Natural killer cell (primary cell): ENCODE measurements at regions of chr20 and their contacts with region 1.

Region 1: DNA sequence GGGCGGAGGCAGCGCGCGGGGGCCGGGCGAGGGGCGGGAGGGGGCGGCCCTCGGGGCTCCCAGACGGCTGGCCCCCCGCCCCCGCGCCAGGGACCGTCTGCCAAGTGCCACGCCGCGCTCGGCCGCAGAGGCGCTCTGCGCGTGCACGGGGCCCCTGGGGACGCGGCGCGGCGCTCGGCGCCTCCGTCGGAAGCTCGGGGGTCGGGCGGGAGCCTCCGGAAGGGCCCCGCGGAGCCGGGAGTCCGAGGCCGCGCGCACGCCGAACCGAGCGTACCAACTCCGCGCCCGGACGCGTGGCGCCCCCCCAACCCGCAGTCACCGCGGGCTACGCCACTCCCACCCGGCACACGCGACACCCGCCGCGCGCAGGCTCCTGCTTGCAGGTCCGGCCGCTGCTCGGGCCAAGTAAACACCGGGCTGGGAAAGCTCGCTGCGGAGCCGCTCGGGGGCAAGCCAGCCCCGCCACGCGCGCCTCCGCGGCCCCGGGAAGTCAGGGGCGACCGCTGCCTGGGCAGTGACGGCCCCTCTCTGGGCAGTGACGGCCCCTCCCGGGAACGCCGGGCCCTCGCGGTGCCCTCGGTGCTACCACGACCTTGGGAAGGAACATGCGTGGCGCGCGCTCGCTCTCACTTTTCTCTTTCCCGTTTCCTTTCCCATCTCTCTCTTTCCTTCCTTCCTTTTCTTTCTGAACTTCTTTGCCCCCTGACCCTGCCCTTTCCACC is 384 bp upstream of the PREX1 start:
- DNase-seq: peak; percentile 89 to 91
- ATAC-seq: peak; percentile 66 to 89 (median 77)
- H3K4me3 ChIP-seq: peak overlapping the region; percentile 23
- H3K4me3 Mint-ChIP-seq: peak overlapping the region; percentile 91
- H3K27ac ChIP-seq: peak overlapping the region; percentile 43
- H3K27ac Mint-ChIP-seq: peak overlapping the region; percentile 81 to 86
- H3K4me1 ChIP-seq: peaks cover 46% of the 10 kb centered on the region
- H3K4me1 Mint-ChIP-seq: peaks cover 32 to 47% of the 10 kb centered on the region in 2 donors
- H3K27me3 ChIP-seq: no peaks in the 10 kb centered on the region
- H3K27me3 Mint-ChIP-seq: no peaks in the 10 kb centered on the region
- CTCF ChIP-seq: no peak

Region 2: GRCh38 chr20:48657475-48658470 is 170.4 kb before region 1 on chr20:
- intact Hi-C with region 1: loop called (anchors 5 kb)
- DNase-seq: peak; percentile 61 to 89
- ATAC-seq: peak; percentile 89 to 97 (median 90)
- H3K4me3 ChIP-seq: no peak overlapping the region
- H3K4me3 Mint-ChIP-seq: peak overlapping the region; percentile 22
- H3K27ac ChIP-seq: no peak overlapping the region
- H3K27ac Mint-ChIP-seq: peak overlapping the region; percentile 79 to 83
- H3K4me1 ChIP-seq: peaks cover 18% of the 10 kb centered on the region
- H3K4me1 Mint-ChIP-seq: peaks cover 44 to 59% of the 10 kb centered on the region in 2 donors
- H3K27me3 ChIP-seq: no peaks in the 10 kb centered on the region
- H3K27me3 Mint-ChIP-seq: no peaks in the 10 kb centered on the region
- CTCF ChIP-seq: peak; percentile 95

Region 3: DNA sequence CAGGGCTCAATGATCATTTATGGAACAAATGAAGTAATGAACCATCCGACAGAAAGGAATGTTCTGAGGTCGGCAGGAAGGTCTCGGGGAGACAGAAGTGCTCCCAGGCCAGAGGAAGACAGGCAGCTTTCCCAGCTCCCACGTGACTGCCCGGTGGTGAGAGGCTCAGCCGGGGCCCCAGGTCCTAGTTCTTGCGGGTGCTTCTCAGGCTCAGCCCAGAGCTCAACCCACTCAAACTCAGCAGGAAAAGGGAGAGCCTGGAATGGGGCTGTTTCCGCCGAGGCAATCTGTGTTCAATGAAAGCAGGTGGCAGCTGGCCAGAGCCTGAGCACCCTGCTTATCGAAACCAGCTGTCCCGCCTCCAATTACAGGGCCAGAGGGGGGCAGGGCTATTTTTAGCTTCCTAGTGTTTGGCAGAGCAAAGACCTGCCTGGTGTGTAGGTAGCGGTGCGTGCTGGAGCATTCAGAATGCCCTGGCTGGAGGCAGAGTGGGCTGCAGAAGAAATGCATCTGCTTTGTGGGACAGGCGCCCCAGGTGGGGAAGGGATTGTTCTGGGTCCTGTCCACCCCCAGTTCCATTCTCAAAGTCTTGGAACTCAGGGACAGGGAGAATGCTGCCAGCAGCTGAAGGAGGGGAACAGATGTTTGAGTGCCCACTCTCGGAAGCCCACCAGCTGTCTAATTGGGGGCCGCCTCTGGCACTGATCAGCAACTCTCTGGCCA is 145.5 kb before region 1 on chr20:
- intact Hi-C with region 1: loop called (anchors 10 kb)
- DNase-seq: no peak
- ATAC-seq: no peak
- H3K4me3 ChIP-seq: no peak overlapping the region
- H3K4me3 Mint-ChIP-seq: no peak overlapping the region
- H3K27ac ChIP-seq: no peak overlapping the region
- H3K27ac Mint-ChIP-seq: no peak overlapping the region
- H3K4me1 ChIP-seq: peaks cover 36% of the 10 kb centered on the region
- H3K4me1 Mint-ChIP-seq: peaks cover 22 to 51% of the 10 kb centered on the region in 2 donors
- H3K27me3 ChIP-seq: no peaks in the 10 kb centered on the region
- H3K27me3 Mint-ChIP-seq: no peaks in the 10 kb centered on the region
- CTCF ChIP-seq: no peak

Region 4: DNA sequence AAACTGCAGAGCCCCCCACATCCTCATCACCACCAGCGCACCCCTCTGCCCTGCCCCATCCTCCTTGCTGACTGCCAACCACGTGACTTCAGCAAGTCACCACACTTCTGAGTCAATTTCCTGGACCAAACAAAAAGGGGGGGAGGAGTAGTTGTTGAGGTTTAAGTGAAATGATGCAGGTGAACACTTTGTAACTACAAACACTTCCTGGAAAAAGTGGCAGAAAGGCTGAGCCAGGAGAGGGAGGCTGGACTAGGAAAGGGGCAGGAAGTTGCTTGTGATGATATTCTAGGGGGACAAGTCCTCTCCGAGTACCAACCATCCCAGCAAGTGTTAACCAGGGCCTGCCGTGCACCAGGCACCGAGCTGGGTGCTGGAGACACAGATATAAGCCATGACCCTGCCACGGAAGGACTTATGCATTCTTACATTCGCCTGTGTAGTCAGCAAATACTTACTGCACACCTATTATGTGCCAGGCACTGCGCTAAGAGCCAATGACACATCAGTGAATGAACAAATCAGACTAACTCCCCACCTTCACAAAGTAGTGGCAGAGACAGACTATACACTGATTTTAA is 67.7 kb before region 1 on chr20:
- intact Hi-C with region 1: loop called (anchors 2 kb)
- DNase-seq: peak; percentile 65 to 89
- ATAC-seq: peak; percentile 61 to 83 (median 74)
- H3K4me3 ChIP-seq: peak overlapping the region; percentile 17
- H3K4me3 Mint-ChIP-seq: peak overlapping the region; percentile 86
- H3K27ac ChIP-seq: peak overlapping the region; percentile 87
- H3K27ac Mint-ChIP-seq: no peak overlapping the region
- H3K4me1 ChIP-seq: peaks cover 95% of the 10 kb centered on the region
- H3K4me1 Mint-ChIP-seq: peaks cover 97 to 100% of the 10 kb centered on the region in 2 donors
- H3K27me3 ChIP-seq: no peaks in the 10 kb centered on the region
- H3K27me3 Mint-ChIP-seq: no peaks in the 10 kb centered on the region
- CTCF ChIP-seq: no peak

Region 5: GRCh38 chr20:48858075-48858790 is 30.1 kb after region 1 on chr20:
- intact Hi-C with region 1: no loop called
- DNase-seq: no peak
- ATAC-seq: no peak
- H3K4me3 ChIP-seq: no peak overlapping the region
- H3K4me3 Mint-ChIP-seq: no peak overlapping the region
- H3K27ac ChIP-seq: no peak overlapping the region
- H3K27ac Mint-ChIP-seq: no peak overlapping the region
- H3K4me1 ChIP-seq: peaks cover 27% of the 10 kb centered on the region
- H3K4me1 Mint-ChIP-seq: peaks cover 24 to 38% of the 10 kb centered on the region in 2 donors
- H3K27me3 ChIP-seq: no peaks in the 10 kb centered on the region
- H3K27me3 Mint-ChIP-seq: peaks cover 0 to under 1% of the 10 kb centered on the region in 2 donors
- CTCF ChIP-seq: no peak